Left cardiac atrium (tissue), 4 donors: ENCODE measurements at regions of chr1 and their contacts with region 1.

Region 1: DNA sequence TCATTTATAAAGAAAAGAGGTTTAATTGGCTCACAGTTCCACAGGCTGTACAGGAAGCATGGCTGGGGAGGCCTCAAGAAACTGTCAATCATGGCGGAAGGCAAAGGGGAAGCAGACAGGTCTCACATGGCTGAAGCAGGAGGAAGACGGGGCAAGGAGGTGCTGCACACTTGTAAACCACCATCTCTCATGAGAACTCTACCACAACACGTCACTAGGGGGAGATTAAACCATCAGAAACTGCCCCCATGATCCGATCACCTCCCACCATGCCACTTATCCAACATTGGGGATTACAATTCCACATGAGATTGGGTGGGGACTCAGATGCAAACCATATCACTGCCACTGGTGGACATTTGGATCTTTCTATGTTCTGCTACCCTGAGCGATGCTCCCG is 351.4 kb downstream of the NPHP4 start:
- DNase-seq: no peak
- ATAC-seq: no peak

Region 2: GRCh38 chr1:5577255-5578040 is 63.4 kb before region 1 on chr1:
- intact Hi-C with region 1: no loop called
- DNase-seq: no peak
- ATAC-seq: no peak

Region 3: GRCh38 chr1:5745776-5746610 is 105.1 kb after region 1 on chr1:
- intact Hi-C with region 1: loop called (anchors 5 to 10 kb)
- DNase-seq: peak; percentile 72
- ATAC-seq: peak; percentile 82 to 86

Region 4: GRCh38 chr1:5949085-5949760 is 308.4 kb after region 1 on chr1:
- intact Hi-C with region 1: no loop called
- DNase-seq: no peak
- ATAC-seq: no peak